Dorsolateral prefrontal cortex (tissue), 120 donors: ENCODE measurements at regions of chr2 and their contacts with region 1.

Region 1: DNA sequence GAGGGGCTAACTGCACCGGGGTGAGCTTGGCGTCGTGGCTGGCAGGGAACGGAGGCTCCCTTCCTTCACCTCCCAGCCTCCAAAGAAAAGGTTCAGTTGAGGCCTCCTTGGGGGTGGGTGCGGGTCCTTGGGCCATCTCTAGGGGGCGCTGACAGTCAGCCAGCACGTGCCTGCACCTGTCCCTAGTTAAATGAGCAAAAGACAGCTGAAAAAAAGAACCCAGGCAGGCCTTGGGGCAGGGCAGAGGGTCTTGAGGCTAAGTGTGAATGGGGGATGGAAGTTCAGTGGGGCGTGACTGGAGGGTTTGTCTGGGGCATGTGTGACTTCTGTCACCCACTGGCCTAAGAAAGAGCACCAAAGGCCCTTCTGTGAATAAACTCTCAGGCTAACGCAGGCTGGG is 56.4 kb downstream of the ZFP36L2 start:
- DNase-seq: no peak
- H3K4me3 ChIP-seq: no peak overlapping the region
- H3K27ac ChIP-seq: peak overlapping the region in 1 of 59 donors; percentile 51
- H3K27me3 ChIP-seq: no peaks in the 10 kb centered on the region
- CTCF ChIP-seq: peak in 41 of 56 donors; percentile 7 to 46 (median 29)

Region 2: GRCh38 chr2:42345986-42346385 is 824.0 kb before region 1 on chr2:
- intact Hi-C with region 1: no loop called
- DNase-seq: no peak
- H3K4me3 ChIP-seq: no peak overlapping the region
- H3K27ac ChIP-seq: peak overlapping the region in 2 of 59 donors; percentile 4 to 18
- H3K27me3 ChIP-seq: no peaks in the 10 kb centered on the region
- CTCF ChIP-seq: no peak

Region 3: GRCh38 chr2:43059183-43059897 is 110.6 kb before region 1 on chr2:
- intact Hi-C with region 1: no loop called
- DNase-seq: peak; percentile 38 to 86 (median 80)
- H3K4me3 ChIP-seq: no peak overlapping the region
- H3K27ac ChIP-seq: peak overlapping the region in 55 of 59 donors; percentile 3 to 88 (median 73)
- H3K27me3 ChIP-seq: no peaks in the 10 kb centered on the region
- CTCF ChIP-seq: peak in 3 of 56 donors; percentile 11 to 18 (median 16)

Region 4: GRCh38 chr2:43133708-43134570 is 36.0 kb before region 1 on chr2:
- intact Hi-C with region 1: no loop called
- DNase-seq: peak in 6 of 10 donors; percentile 47 to 69 (median 54)
- H3K4me3 ChIP-seq: no peak overlapping the region
- H3K27ac ChIP-seq: peak overlapping the region in 21 of 59 donors; percentile 6 to 68 (median 41)
- H3K27me3 ChIP-seq: no peaks in the 10 kb centered on the region
- CTCF ChIP-seq: no peak

Region 5: DNA sequence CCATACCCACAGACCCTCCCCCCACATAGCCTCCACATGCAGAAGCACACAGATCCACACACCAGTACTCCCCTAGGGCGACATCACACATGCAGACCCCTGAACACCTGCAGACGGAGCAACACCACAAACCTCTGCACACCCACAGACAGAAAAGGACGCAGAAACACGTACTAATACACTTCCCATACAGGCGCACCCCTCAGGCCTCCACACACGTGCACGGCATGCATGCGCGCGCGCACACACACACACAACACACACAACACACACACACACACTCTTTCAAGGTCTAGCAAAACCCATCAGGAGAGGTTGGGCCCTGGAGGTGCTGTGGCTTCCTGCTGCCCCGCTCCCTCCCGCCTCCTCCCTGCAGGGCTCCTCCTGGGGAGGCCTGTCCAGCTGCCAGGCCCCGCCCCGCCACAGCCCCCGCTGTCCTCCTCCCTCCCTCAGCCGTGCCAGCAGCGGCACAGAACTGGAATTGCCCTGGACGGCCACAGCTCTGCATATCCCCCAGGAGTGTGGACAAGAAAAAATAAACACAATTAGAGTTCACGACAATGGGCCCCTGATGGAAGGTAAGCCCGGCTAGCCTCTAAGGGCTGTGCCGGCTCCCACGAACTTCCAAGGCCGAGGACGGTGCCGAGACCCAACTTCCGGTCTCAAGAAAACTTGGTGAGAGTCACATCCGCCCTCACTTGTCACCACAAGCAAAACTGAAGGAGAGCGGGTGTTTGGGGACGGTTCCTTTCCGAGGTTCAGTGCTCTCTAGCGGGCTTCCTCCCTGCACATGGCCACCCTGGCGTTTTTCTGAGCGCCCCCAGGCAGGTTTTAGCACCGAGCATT is 49.6 kb after region 1 on chr2:
- intact Hi-C with region 1: loop called in 1 of 2 experiments (anchors 5 kb)
- DNase-seq: peak in 9 of 10 donors; percentile 60 to 80 (median 72)
- H3K4me3 ChIP-seq: peak overlapping the region; percentile 1 to 93 (median 78)
- H3K27ac ChIP-seq: peak overlapping the region; percentile 82 to 100 (median 98)
- H3K27me3 ChIP-seq: peaks cover 0 to 2% (median 0%) of the 10 kb centered on the region in 45 donors
- CTCF ChIP-seq: peak in 6 of 56 donors; percentile 1 to 24 (median 11)